ENCODE measurements at regions of chr1 and their contacts with region 1.

Region 1: DNA sequence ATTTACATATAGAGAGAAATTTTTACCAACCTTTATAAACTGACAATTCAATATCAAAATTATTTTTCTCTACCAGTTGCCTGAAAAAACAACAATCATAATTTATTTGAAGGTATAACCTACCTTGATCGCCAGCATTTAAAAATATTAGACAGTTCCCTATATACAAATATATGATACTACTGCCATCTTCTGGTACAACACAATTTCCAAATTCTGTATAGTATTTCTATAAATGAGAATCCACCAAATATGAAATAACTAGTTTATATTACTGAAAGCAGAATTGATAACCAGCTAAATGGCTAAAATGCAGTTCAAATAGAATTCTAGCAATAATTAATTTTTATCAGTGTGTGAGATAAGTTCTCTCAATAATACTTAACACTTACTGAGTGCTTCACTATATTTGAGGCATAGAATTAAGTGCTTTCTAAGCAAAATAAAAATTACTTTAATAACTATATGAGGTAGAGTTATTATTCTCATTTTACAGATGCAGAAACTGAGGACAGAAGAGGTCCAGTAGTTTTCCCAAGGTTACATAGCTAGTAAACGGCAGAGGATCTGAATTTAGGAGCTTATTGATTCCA is 75.6 kb downstream of the PIGK start:
- DNase-seq: peak; percentile 54
- ATAC-seq: peak; percentile 48; the same call in 1 of the 2 replicates
- H3K4me3 ChIP-seq: no peak overlapping the region
- H3K27ac ChIP-seq: no peak overlapping the region
- H3K4me1 ChIP-seq: no peaks in the 10 kb centered on the region
- H3K27me3 ChIP-seq: no peaks in the 10 kb centered on the region
- CTCF ChIP-seq: peak; percentile 73

Region 2: GRCh38 chr1:76154206-76154956 is 989.2 kb before region 1 on chr1:
- CTCF ChIA-PET with region 1: no interaction called
- POLR2A ChIA-PET with region 1: no interaction called
- intact Hi-C with region 1: loop called (anchors 1 kb)
- DNase-seq: peak; percentile 80
- ATAC-seq: peak; percentile 96
- H3K4me3 ChIP-seq: peak overlapping the region; percentile 65
- H3K27ac ChIP-seq: no peak overlapping the region
- H3K4me1 ChIP-seq: peaks cover 5% of the 10 kb centered on the region; the same call in 1 of the 2 replicates
- H3K27me3 ChIP-seq: peaks cover 40% of the 10 kb centered on the region
- CTCF ChIP-seq: peak; percentile 96

Region 3: DNA sequence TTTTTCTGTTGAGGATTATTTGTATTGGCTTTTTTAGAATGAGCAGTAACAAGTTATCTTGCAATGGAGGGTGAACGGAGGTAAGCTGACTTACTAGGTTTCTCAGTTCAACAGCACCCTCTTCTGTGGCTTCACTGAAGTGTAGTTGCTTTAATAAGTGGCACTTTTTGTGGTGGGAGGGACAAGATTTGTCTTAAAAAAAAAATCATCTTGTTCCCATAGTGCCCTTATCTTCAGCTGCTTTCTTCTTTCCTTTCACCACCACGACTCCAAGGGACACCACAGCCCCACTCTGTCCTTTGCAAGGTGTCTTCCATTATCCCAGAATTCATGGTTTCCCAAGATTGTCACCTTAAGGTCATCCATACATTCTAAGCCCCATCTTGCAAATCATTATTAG is 17.3 kb before region 1 on chr1:
- CTCF ChIA-PET with region 1: no interaction called
- POLR2A ChIA-PET with region 1: no interaction called
- intact Hi-C with region 1: no loop called
- DNase-seq: peak; percentile 79
- ATAC-seq: peak; percentile 80
- H3K4me3 ChIP-seq: no peak overlapping the region
- H3K27ac ChIP-seq: no peak overlapping the region
- H3K4me1 ChIP-seq: 0 out of 2 replicates have a peak, but pooled peaks cover 4% of the 10 kb centered on the region
- H3K27me3 ChIP-seq: no peaks in the 10 kb centered on the region
- CTCF ChIP-seq: peak; percentile 88

Region 4: GRCh38 chr1:77313491-77313890 is 169.9 kb after region 1 on chr1:
- CTCF ChIA-PET with region 1: no interaction called
- POLR2A ChIA-PET with region 1: no interaction called
- intact Hi-C with region 1: loop called (anchors 2 kb)
- DNase-seq: peak; percentile 41
- ATAC-seq: peak; percentile 70
- H3K4me3 ChIP-seq: no peak overlapping the region
- H3K27ac ChIP-seq: no peak overlapping the region
- H3K4me1 ChIP-seq: peaks cover under 1% of the 10 kb centered on the region
- H3K27me3 ChIP-seq: no peaks in the 10 kb centered on the region
- CTCF ChIP-seq: peak; percentile 63

Region 5: GRCh38 chr1:77533660-77534305 is 390.2 kb after region 1 on chr1:
- CTCF ChIA-PET with region 1: no interaction called
- POLR2A ChIA-PET with region 1: no interaction called
- intact Hi-C with region 1: loop called (anchors 1 kb)
- DNase-seq: peak; percentile 65
- ATAC-seq: peak; percentile 32
- H3K4me3 ChIP-seq: no peak overlapping the region
- H3K27ac ChIP-seq: no peak overlapping the region
- H3K4me1 ChIP-seq: peaks cover 31% of the 10 kb centered on the region
- H3K27me3 ChIP-seq: no peaks in the 10 kb centered on the region
- CTCF ChIP-seq: peak; percentile 88

Region 6: DNA sequence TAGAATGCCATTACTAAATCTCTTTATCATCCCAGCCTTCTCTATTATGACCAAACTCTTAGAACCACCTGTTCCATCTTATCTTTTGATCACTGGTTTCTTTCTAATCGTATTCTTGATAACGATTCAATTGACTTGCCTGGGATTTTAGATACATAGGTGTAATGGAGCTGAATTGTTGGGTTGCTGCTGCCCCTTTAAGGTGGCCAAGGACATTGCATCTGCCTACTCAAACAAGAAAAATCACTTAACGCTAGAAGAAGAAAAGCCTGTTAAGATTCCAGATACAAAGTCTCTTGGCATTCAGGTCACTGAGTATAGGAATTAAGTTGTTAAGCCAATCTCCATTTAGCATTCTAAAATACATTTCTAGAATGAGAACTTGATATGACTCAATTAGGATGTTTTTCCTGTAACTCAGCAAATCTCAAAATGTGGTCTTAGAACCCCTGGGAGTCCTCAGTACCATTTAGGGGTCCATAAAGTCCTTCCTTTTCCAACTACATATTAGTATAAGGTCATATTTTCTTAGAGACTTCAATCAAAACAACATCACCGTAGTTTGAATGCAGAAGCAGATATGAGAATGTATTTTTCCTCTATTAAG is 757.2 kb after region 1 on chr1:
- CTCF ChIA-PET with region 1: no interaction called
- POLR2A ChIA-PET with region 1: no interaction called
- intact Hi-C with region 1: loop called (anchors 1 kb)
- DNase-seq: peak; percentile 69
- ATAC-seq: peak; percentile 85
- H3K4me3 ChIP-seq: no peak overlapping the region
- H3K27ac ChIP-seq: no peak overlapping the region
- H3K4me1 ChIP-seq: peaks cover 10% of the 10 kb centered on the region
- H3K27me3 ChIP-seq: no peaks in the 10 kb centered on the region
- CTCF ChIP-seq: peak; percentile 93

Measured in PC-3 (cell line).